ENCODE measurements at regions of chr11 and their contacts with region 1.

Region 1: GRCh38 chr11:119533921-119534736 is 111.2 kb upstream of the THY1 start:
- DNase-seq: peak; percentile 57
- ATAC-seq: peak; percentile 79
- H3K4me3 Mint-ChIP-seq: no peak overlapping the region
- H3K27ac Mint-ChIP-seq: no peak overlapping the region
- H3K4me1 Mint-ChIP-seq: no peaks in the 10 kb centered on the region
- H3K27me3 Mint-ChIP-seq: peaks cover 37% of the 10 kb centered on the region
- CTCF ChIP-seq: peak; percentile 61

Region 2: GRCh38 chr11:119481021-119481666 is 53.0 kb before region 1 on chr11:
- CTCF ChIA-PET with region 1: interaction called, 22 read pairs
- POLR2A ChIA-PET with region 1: interaction called, 3 read pairs
- intact Hi-C with region 1: loop called (anchors 1 kb)
- DNase-seq: peak; percentile 70
- ATAC-seq: peak; percentile 79
- H3K4me3 Mint-ChIP-seq: no peak overlapping the region
- H3K27ac Mint-ChIP-seq: no peak overlapping the region
- H3K4me1 Mint-ChIP-seq: peaks cover 5% of the 10 kb centered on the region
- H3K27me3 Mint-ChIP-seq: peaks cover 40% of the 10 kb centered on the region
- CTCF ChIP-seq: no peak